A673 (cell line): ENCODE measurements at regions of chr2 and their contacts with region 1.

Region 1: DNA sequence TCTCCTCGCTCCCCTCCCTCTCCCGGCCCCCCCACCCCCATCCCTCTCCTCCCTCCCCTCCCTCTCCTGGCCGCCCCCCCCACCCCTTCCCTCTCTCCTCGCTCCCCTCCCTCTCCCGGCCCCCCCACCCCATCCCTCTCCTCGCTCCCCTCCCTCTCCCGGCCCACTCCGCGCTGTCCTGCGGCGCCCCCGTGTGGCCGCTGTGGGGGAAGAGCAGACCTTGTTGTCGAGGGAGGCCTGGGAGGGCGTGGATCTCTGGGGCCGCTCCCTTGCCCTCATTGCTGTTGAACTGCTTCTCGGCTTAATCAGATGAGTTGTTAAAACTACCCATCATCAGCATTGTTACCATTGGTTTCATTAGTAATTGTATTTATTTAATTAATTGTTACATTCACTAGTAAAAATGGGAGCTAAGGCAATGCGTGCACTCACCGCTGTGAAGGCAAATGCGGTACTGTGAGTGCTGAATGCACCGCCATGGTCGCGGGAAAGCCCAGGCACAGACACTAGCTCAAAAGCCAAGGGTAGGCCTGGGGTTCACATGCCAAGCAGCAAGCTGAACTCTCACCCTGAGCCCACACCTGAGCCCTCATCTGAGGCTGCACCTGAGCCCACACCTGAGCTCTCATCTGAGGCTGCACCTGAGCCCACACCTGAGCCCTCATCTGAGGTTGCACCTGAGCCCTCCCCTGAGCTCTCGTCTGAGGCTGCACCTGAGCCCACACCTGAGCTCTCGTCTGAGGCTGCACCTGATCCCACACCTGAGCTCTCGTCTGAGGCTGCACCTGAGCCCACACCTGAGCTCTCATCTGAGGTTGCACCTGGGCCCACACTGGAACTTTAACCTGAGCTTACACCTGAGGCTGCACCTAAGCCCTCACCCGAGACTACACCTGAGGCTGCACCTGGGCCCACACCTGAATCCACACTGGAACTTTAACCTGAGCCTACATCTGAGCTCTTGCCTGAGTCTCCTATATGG is 8.8 kb downstream of the RTP5 start:
- DNase-seq: peak; percentile 94
- H3K4me3 ChIP-seq: no peak overlapping the region
- H3K27ac ChIP-seq: no peak overlapping the region
- H3K4me1 ChIP-seq: peaks cover 19% of the 10 kb centered on the region
- H3K27me3 ChIP-seq: no peaks in the 10 kb centered on the region
- CTCF ChIP-seq: peak; percentile 80

Region 2: GRCh38 chr2:240840435-240841080 is 1037.7 kb before region 1 on chr2:
- CTCF ChIA-PET with region 1: no interaction called
- POLR2A ChIA-PET with region 1: no interaction called
- intact Hi-C with region 1: loop called (anchors 10 kb)
- DNase-seq: peak; percentile 54
- H3K4me3 ChIP-seq: no peak overlapping the region
- H3K27ac ChIP-seq: no peak overlapping the region
- H3K4me1 ChIP-seq: no peaks in the 10 kb centered on the region
- H3K27me3 ChIP-seq: peaks cover 22% of the 10 kb centered on the region
- CTCF ChIP-seq: peak; percentile 54

Region 3: GRCh38 chr2:241315093-241315878 is 563.0 kb before region 1 on chr2 and contains the start of gene HDLBP:
- CTCF ChIA-PET with region 1: interaction called, 12 read pairs
- POLR2A ChIA-PET with region 1: no interaction called
- intact Hi-C with region 1: no loop called
- DNase-seq: peak; percentile 99
- H3K4me3 ChIP-seq: peak within 1 kb of the TSS; percentile 71
- H3K27ac ChIP-seq: peak within 1 kb of the TSS; percentile 99
- H3K4me1 ChIP-seq: peaks cover 40% of the 10 kb centered on the region
- H3K27me3 ChIP-seq: no peaks in the 10 kb centered on the region
- CTCF ChIP-seq: peak; percentile 80
- total RNA-seq, gene HDLBP: 510 and 581 TPM in 2 replicates

Region 4: GRCh38 chr2:241355983-241356870 is 522.1 kb before region 1 on chr2 and contains the start of gene FARP2:
- CTCF ChIA-PET with region 1: no interaction called
- POLR2A ChIA-PET with region 1: no interaction called
- intact Hi-C with region 1: loop called (anchors 5 kb)
- DNase-seq: peak; percentile 99
- H3K4me3 ChIP-seq: peak within 1 kb of the TSS; percentile 82
- H3K27ac ChIP-seq: peak within 1 kb of the TSS; percentile 85
- H3K4me1 ChIP-seq: peaks cover 17% of the 10 kb centered on the region
- H3K27me3 ChIP-seq: no peaks in the 10 kb centered on the region
- CTCF ChIP-seq: no peak
- total RNA-seq, gene FARP2: 53.3 and 72.1 TPM in 2 replicates

Region 5: DNA sequence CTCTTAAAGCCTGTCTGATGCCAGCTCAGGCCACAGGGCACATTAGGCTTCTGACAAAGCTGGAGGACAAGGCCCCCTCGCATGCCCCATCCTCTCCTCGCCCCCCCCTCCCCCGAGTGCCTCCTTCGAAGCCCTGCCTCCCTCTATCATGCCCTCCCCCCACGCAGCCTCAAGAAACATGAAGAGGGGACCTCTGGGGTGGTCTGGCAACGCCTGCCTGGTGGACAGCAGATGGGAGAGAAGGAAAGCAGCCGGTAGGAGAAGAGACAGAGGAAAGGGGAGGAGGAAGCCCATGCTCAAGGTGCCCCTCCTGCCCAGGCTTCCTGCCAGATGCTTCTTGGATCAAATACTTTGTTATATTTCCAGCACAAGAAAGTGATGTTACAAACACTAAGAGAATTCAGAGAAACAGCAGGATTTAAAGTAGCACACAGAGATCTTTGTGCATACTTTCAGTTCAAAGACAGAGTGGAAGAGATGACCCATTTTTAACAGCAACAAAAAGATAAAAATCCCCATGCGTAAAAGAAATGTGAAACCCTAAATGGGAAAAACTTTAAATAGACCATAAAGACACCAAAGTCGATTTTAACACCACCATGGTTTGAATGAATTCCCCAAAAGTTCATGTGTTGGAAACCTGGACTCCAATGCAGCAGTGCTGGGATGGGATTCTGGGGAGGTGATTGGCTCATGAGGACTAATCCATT is 300.7 kb before region 1 on chr2:
- CTCF ChIA-PET with region 1: no interaction called
- POLR2A ChIA-PET with region 1: no interaction called
- intact Hi-C with region 1: no loop called
- DNase-seq: no peak
- H3K4me3 ChIP-seq: no peak overlapping the region
- H3K27ac ChIP-seq: no peak overlapping the region
- H3K4me1 ChIP-seq: peaks cover 3% of the 10 kb centered on the region
- H3K27me3 ChIP-seq: no peaks in the 10 kb centered on the region
- CTCF ChIP-seq: no peak

Region 6: DNA sequence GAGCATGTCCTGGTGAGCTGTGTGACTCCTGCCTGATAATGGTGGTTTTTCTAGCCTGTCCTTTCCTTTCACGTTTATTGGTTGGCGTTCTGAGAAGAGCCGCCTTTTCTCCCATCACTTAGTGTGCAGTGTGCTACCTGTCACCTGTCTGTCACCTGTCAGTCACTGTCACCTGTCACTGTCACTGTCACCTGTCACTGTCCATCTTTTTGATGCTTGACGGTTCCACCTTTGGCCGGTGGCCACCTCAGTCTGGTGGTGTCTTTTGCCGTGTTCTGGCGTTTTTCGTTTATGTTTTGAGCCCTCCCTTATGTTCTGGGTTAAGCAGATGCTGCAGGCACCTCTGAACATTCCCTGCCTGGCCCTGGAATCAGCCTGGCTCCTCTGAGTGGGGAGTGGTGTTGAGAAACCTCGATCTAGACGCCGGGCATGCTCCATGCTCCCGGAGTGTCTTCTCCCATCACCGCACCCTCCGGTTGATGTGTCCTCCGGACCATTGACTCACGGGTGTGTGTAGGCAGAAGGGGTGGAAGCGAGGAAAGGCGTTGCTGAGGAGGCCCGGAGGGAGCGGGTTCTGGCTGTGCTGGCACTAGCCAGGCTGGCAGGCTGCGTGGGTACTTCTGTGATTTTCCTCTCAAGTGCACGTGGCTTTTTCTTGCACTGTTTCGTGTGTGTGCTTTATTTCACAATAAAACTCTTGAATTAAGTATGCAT is 212.4 kb before region 1 on chr2:
- CTCF ChIA-PET with region 1: interaction called, 3 read pairs
- POLR2A ChIA-PET with region 1: no interaction called
- intact Hi-C with region 1: loop called (anchors 2 kb)
- DNase-seq: no peak
- H3K4me3 ChIP-seq: no peak overlapping the region
- H3K27ac ChIP-seq: no peak overlapping the region
- H3K4me1 ChIP-seq: no peaks in the 10 kb centered on the region
- H3K27me3 ChIP-seq: no peaks in the 10 kb centered on the region
- CTCF ChIP-seq: no peak

Region 7: GRCh38 chr2:241675885-241676284 is 202.4 kb before region 1 on chr2:
- CTCF ChIA-PET with region 1: no interaction called
- POLR2A ChIA-PET with region 1: no interaction called
- intact Hi-C with region 1: no loop called
- DNase-seq: no peak
- H3K4me3 ChIP-seq: no peak overlapping the region
- H3K27ac ChIP-seq: no peak overlapping the region
- H3K4me1 ChIP-seq: no peaks in the 10 kb centered on the region
- H3K27me3 ChIP-seq: no peaks in the 10 kb centered on the region
- CTCF ChIP-seq: 0 out of 2 replicates have a peak, but pooled peaks have one; percentile 22

Region 8: DNA sequence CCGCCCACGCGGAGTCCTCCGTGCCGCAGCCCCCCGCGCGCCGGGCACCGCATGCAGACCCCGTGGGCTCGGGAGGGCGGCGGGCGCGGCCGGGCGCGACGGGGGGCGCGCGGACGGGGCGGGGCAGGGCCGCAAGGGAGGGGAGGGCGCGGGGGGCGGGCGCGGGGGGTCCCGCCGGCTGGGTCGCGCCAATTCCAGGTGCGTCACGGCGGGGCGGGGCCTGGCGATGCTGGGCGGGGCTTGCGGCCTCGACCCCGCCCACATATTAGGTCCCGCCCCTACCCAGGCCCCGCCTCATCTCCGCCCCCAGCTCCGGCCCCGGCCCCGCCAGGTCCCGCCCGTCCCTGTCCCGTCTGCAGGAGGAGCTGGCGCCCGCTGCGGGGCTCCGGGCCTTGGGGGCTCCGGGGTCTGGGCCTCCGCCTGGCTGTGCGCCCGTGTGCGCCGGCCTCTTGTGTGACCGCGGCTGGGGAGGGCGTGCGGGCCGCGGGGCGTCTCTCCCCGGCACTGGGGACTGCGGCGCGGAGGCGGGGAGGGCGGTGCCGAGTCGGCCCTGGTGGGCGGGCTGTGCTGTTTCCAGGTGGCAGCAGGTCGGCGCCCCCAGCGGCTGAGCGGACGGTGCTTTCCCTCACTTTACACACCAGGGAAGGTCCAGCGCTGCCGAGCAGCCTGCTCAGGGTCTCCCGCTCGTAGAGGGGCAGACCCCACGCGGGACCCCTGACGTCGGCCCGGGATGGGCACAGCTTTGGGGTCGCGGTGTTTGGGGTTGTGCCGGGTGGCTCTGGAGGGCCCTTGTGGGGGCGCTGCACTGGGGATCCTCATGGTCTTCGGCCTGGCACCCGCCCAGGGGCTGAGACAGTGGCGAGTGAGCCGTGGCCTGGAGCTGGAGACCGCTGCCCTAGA is 175.9 kb before region 1 on chr2:
- CTCF ChIA-PET with region 1: no interaction called
- POLR2A ChIA-PET with region 1: no interaction called
- intact Hi-C with region 1: loop called (anchors 10 kb)
- DNase-seq: peak; percentile 76
- H3K4me3 ChIP-seq: peak overlapping the region; percentile 94
- H3K27ac ChIP-seq: peak overlapping the region; percentile 98
- H3K4me1 ChIP-seq: peaks cover 9% of the 10 kb centered on the region
- H3K27me3 ChIP-seq: no peaks in the 10 kb centered on the region
- CTCF ChIP-seq: peak; percentile 48

Region 9: DNA sequence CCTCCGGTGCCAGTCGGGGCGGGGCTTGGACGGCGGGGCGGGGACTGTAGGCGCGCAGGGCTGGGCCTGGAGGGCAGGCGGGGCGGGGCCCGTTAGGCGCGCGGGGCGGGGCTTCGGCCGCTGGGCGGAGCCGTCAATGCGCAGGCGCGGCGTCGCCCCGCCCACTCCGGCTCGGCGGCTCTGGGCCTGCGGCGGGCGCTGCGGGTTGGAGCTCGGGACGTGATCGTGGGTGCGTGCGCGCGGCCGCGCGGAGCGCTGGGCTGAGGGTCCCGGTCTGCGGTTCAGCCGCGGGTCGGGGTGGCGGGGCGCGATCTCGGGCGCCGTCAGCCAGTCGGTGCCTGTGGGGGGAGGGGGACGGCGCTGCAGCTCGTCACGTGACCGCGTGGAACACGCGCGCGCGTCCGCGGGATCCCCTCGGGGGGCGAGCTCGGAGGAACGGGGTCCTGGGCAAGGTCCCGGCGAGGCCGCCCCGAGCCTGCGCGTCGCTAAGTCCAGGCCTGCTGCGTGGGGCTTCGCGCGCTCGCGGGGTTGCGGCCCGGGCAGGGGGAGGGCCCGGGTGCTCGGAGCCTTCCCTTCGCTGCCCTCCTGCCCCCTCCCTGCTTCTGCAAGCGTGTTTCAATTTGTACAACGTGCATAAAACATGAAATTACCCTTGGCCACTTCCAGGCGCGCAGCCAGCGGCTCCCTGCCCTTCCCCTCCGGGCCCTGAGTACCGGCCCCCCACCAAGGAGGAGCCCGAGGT is 143.6 kb before region 1 on chr2 and contains the start of gene D2HGDH:
- CTCF ChIA-PET with region 1: interaction called, 3 read pairs
- POLR2A ChIA-PET with region 1: no interaction called
- intact Hi-C with region 1: loop called (anchors 2 kb)
- DNase-seq: peak; percentile 91
- H3K4me3 ChIP-seq: peak within 1 kb of the TSS; percentile 80
- H3K27ac ChIP-seq: peak within 1 kb of the TSS; percentile 93
- H3K4me1 ChIP-seq: peaks cover 5% of the 10 kb centered on the region
- H3K27me3 ChIP-seq: no peaks in the 10 kb centered on the region
- CTCF ChIP-seq: no peak
- total RNA-seq, gene D2HGDH: 30.7 and 44.3 TPM in 2 replicates